Activated T-helper 1 cell treated with anti-CD3 and anti-CD28 coated beads, Interleukin-12 subunit alpha, Interleukin-12 subunit beta, Interleukin-2, Interleukin-4 antibody, amounts not matched to agents 30 ng/mL and 10 ng/mL and 1 ng/mL, durations not matched to agents 14 hours and 24 hours and 36 hours (primary cell): ENCODE measurements at regions of chr11 and their contacts with region 1.

Region 1: DNA sequence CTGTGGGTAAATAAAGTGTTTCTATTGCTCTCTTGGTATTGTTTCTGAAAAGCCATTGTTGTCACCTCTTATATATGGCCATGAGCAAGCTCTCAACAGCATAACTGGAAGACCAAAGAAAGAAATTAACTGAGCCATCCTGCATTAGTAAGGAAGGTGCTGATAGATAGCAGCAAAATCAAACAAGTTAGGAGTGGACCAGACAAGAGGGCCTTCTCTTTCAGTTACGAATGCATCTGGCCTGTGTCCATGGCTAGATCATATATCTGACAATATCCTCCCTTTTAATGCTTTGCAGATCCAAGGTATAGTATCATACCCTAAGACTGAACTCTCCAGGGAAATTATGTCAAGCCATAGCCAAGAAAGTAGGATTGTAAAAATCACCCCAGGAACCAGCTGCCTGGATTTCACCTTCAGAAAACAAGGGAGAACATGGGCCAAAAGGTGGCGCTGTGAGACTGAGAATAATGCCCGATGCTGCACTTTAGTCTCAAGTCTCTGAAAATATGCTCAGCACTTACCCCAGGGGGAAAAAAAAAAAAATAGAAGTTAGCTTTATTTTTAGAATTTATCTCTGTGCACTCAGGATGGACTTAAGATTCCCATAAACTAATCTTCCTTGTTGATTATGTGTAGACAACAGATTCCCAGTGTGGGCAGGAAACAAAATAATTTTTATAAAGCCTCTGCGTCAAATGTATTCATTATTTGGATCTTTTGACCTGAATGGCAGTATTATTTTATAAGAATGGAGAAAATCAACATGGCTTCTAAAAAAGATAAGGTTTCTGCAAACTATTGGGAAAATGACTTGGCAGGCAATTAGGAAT is 415.1 kb downstream of the ETS1 start:
- DNase-seq: peak; percentile 75
- H3K4me3 Mint-ChIP-seq: no peak overlapping the region
- H3K27ac Mint-ChIP-seq: peak overlapping the region; percentile 25
- H3K4me1 Mint-ChIP-seq: peaks cover 25% of the 10 kb centered on the region
- H3K27me3 Mint-ChIP-seq: no peaks in the 10 kb centered on the region

Region 2: GRCh38 chr11:128195057-128195751 is 22.9 kb after region 1 on chr11:
- intact Hi-C with region 1: loop called (anchors 1 kb)
- DNase-seq: peak; percentile 42
- H3K4me3 Mint-ChIP-seq: no peak overlapping the region
- H3K27ac Mint-ChIP-seq: peak overlapping the region; percentile 60
- H3K4me1 Mint-ChIP-seq: peaks cover 47% of the 10 kb centered on the region
- H3K27me3 Mint-ChIP-seq: peaks cover 2% of the 10 kb centered on the region

Region 3: DNA sequence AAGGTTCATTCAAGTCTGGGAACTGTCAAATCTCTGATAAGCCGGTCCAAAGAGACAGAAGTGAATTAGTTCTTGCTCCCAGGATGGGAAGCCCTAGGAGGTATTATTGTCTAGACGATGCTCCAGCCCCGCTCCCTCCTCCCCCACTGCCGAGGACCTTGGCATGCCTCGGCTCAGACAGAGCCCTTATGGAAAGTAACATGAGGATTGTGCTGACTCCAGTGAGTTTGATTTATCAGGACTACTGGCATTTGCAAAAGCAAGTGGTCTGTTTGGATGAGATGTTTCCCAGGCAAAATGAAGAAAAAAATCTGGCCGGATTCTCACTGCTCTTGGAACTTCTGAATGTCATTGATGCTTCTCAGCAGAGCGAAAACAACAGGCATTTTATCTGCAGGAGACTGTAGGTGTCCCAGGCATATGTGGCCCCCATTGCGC is 74.1 kb after region 1 on chr11:
- intact Hi-C with region 1: no loop called
- DNase-seq: no peak
- H3K4me3 Mint-ChIP-seq: no peak overlapping the region
- H3K27ac Mint-ChIP-seq: no peak overlapping the region
- H3K4me1 Mint-ChIP-seq: no peaks in the 10 kb centered on the region
- H3K27me3 Mint-ChIP-seq: peaks cover 5% of the 10 kb centered on the region

Region 4: DNA sequence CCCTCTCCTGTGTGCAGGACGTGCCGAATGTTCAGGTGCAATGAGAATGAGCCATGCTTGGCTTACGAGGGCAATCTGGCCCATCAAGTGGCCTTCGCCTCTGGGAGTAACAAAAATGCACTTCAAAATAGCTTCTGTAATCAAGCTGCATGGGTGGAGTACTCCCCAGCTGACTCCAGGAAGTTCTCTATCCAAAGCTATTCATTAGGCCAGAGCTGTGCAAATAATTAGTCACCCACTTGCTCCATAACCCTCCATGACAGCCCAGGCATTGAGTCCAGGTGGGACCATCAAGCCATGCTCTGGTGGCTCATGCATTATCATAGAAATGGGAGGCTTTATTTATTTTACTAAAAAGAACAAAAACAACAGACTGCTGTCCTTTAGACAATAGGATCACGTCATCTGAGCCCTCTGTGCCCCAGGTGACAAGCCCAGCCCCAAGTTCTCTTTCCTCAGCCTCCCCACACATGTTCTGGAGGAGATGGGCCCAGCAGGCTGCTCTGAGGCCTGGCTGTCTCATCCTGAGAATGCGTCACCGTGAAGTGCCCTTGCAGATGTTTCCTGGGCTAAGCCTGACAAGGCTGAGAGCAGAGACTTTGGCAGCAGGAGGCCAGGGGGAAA is 170.4 kb after region 1 on chr11:
- intact Hi-C with region 1: loop called (anchors 5 kb)
- DNase-seq: peak; percentile 70
- H3K4me3 Mint-ChIP-seq: peak overlapping the region; percentile 76
- H3K27ac Mint-ChIP-seq: peak overlapping the region; percentile 85
- H3K4me1 Mint-ChIP-seq: peaks cover 92% of the 10 kb centered on the region
- H3K27me3 Mint-ChIP-seq: no peaks in the 10 kb centered on the region

Region 5: DNA sequence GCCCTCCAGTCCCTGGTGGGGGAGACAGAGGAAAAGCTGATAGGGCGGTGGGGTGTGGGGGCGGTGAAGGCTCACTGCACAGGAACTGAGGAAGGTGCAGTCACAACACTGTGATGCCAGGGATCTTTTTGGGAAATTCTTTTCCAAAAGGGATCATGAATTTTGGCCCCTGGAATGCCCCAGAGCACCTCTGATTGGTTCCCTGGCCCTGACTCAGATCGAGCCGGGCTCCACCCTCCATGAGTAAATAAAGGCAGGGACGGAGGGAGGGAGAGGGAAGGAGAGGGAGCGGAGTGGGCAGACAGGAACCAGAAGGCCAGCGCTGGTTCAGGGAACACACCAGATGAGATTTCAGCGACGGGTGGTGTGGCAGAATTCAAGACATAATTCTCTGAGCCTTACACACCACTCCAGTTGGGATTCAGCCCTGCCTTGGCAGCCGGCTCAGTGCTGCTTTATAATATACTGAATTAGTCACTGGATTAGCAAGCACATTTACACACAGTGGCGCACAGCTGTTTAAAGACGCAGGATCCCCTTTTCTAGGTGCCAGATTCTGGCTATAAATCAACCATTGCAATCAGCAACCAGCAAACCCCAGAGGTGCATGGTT is 334.8 kb after region 1 on chr11:
- intact Hi-C with region 1: loop called (anchors 2 kb)
- DNase-seq: no peak
- H3K4me3 Mint-ChIP-seq: peak overlapping the region; percentile 96
- H3K27ac Mint-ChIP-seq: peak overlapping the region; percentile 98
- H3K4me1 Mint-ChIP-seq: peaks cover 100% of the 10 kb centered on the region
- H3K27me3 Mint-ChIP-seq: peaks cover 1% of the 10 kb centered on the region

Region 6: DNA sequence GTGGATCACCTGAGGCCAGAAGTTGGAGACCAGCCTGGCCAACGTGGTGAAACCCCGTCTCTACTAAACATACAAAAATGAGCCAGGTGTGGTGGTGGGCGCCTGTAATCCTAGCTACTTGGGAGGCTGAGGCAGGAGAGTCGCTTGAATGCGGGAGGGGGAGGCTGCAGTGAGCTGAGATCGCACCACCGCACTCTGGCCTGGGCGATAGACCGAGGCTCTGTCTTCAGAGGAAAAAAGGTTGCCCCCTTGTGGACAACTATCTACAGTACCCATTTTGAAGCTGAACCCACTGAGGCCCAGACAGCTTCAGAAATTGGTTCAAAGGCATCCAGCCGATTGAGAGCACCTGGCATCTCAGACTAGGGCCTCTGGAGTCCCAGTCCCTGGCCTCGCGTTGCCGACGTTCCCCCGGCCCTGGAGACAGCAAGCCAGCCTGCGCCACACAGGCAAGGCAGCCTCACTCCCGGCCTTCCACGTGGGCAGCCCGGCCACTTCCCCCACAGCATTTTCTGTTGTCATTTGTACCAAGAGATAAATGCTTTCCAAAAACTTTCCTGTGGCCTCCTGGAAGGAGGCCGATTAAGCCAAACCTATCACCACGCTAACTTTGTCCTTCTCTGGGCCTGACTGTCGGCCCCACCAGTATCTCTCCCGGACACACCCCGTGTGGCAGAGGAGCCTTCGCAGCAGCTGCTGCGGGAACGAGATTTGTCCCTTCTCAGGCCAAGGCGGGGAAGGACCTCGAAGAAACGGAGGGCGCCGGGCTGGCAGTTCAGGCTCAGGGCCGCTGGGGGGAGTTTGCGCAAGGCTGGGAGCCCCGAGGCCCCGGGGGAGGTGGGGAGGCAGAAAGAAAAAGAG is 604.4 kb after region 1 on chr11:
- intact Hi-C with region 1: loop called (anchors 5 kb)
- DNase-seq: no peak
- H3K4me3 Mint-ChIP-seq: no peak overlapping the region
- H3K27ac Mint-ChIP-seq: peak overlapping the region; percentile 45
- H3K4me1 Mint-ChIP-seq: peaks cover 40% of the 10 kb centered on the region
- H3K27me3 Mint-ChIP-seq: no peaks in the 10 kb centered on the region